ENCODE measurements at regions of chr15 and their contacts with region 1.

Region 1: GRCh38 chr15:72199711-72200212 is 2.2 kb upstream of the GRAMD2A start:
- DNase-seq: peak; percentile 73
- H3K4me3 ChIP-seq: no peak overlapping the region
- H3K27ac ChIP-seq: no peak overlapping the region
- H3K4me1 ChIP-seq: peaks cover 8% of the 10 kb centered on the region
- H3K27me3 ChIP-seq: peaks cover 0 to 2% of the 10 kb centered on the region in 2 experiments
- CTCF ChIP-seq: peak; percentile 86 to 92
- POLR2A ChIP-seq: no peak

Region 2: GRCh38 chr15:72117486-72118399 is 82.0 kb before region 1 on chr15 and contains the start of gene MYO9A:
- CTCF ChIA-PET with region 1: no interaction called
- POLR2A ChIA-PET with region 1: no interaction called
- dilution Hi-C with region 1: no loop called
- intact Hi-C with region 1: loop called (anchors 1 kb)
- DNase-seq: peak; percentile 99
- H3K4me3 ChIP-seq: peak within 1 kb of the TSS; percentile 62 to 93 (median 84)
- H3K27ac ChIP-seq: peak within 1 kb of the TSS; percentile 90
- H3K4me1 ChIP-seq: peaks cover 18% of the 10 kb centered on the region
- H3K27me3 ChIP-seq: no peaks in the 10 kb centered on the region
- CTCF ChIP-seq: peak in 1 of 2 donors; percentile 13
- POLR2A ChIP-seq: peak; percentile 55
- total RNA-seq, gene MYO9A: 30.3 and 30.6 TPM in 2 replicates

Region 3: GRCh38 chr15:72272213-72273002 is 72.6 kb after region 1 on chr15 and contains the start of gene PARP6:
- CTCF ChIA-PET with region 1: interaction called, 5 read pairs
- POLR2A ChIA-PET with region 1: no interaction called
- dilution Hi-C with region 1: no loop called
- intact Hi-C with region 1: loop called (anchors 2 kb)
- DNase-seq: peak; percentile 99
- H3K4me3 ChIP-seq: peak within 1 kb of the TSS; percentile 45 to 97 (median 66)
- H3K27ac ChIP-seq: peak within 1 kb of the TSS; percentile 57
- H3K4me1 ChIP-seq: peaks cover 12% of the 10 kb centered on the region
- H3K27me3 ChIP-seq: no peaks in the 10 kb centered on the region
- CTCF ChIP-seq: peak; percentile 31 to 74
- POLR2A ChIP-seq: peak; percentile 58
- total RNA-seq, gene PARP6: 37.4 and 41.1 TPM in 2 replicates

Region 4: GRCh38 chr15:72285927-72286516 is 86.3 kb after region 1 on chr15:
- CTCF ChIA-PET with region 1: interaction called, 63 read pairs
- POLR2A ChIA-PET with region 1: no interaction called
- dilution Hi-C with region 1: no loop called
- intact Hi-C with region 1: loop called (anchors 1 kb)
- DNase-seq: peak; percentile 40
- H3K4me3 ChIP-seq: no peak overlapping the region
- H3K27ac ChIP-seq: no peak overlapping the region
- H3K4me1 ChIP-seq: no peaks in the 10 kb centered on the region
- H3K27me3 ChIP-seq: peaks cover 1% of the 10 kb centered on the region in 2 experiments
- CTCF ChIP-seq: peak; percentile 65 to 77
- POLR2A ChIP-seq: no peak

Region 5: GRCh38 chr15:72389231-72389630 is 189.5 kb after region 1 on chr15:
- CTCF ChIA-PET with region 1: no interaction called
- POLR2A ChIA-PET with region 1: interaction called, 11 read pairs
- dilution Hi-C with region 1: no loop called
- intact Hi-C with region 1: no loop called
- DNase-seq: no peak
- H3K4me3 ChIP-seq: no peak overlapping the region
- H3K27ac ChIP-seq: no peak overlapping the region
- H3K4me1 ChIP-seq: no peaks in the 10 kb centered on the region
- H3K27me3 ChIP-seq: peaks cover 8 to 12% of the 10 kb centered on the region in 2 experiments
- CTCF ChIP-seq: no peak
- POLR2A ChIP-seq: no peak

Measured in endothelial cell of umbilical vein (primary cell).